ENCODE measurements at regions of chr12 and their contacts with region 1.

Region 1: GRCh38 chr12:14803011-14803829 is at the starts of genes C12orf60 and WBP11:
- DNase-seq: peak; percentile 93
- H3K4me3 Mint-ChIP-seq: no peak within 1 kb of the TSS
- H3K27ac Mint-ChIP-seq: no peak within 1 kb of the TSS
- H3K4me1 Mint-ChIP-seq: peaks cover 35% of the 10 kb centered on the region
- H3K27me3 Mint-ChIP-seq: no peaks in the 10 kb centered on the region
- total RNA-seq, gene C12orf60: 3.3 to 3.4 TPM
- total RNA-seq, gene WBP11: 131 to 134 TPM

Region 2: GRCh38 chr12:14540801-14541462 is 262.3 kb before region 1 on chr12:
- CTCF ChIA-PET with region 1: no interaction called
- POLR2A ChIA-PET with region 1: no interaction called
- intact Hi-C with region 1: no loop called
- DNase-seq: no peak
- H3K4me3 Mint-ChIP-seq: no peak overlapping the region
- H3K27ac Mint-ChIP-seq: no peak overlapping the region
- H3K4me1 Mint-ChIP-seq: no peaks in the 10 kb centered on the region
- H3K27me3 Mint-ChIP-seq: peaks cover 2% of the 10 kb centered on the region

Region 3: DNA sequence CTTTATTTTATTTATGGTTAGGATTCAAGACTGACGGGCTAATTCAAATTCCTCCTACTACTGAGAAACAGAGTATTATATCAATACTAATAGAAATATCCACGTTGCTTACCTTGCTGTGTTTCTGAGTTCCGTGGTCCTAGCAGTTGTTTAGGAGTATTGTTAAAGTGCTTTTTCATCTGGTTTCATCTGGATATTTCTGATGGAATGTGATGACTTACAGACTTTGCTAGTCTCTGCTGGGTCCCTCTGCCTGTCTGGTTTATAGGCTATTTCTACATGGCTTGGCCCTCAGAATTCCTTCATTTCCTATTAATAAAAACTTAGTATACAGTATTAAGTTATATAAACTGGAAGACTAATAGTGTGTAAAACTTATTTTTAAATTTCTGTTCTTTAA is 10.8 kb after region 1 on chr12 and contains the start of gene SMCO3:
- CTCF ChIA-PET with region 1: no interaction called
- POLR2A ChIA-PET with region 1: no interaction called
- intact Hi-C with region 1: no loop called
- DNase-seq: no peak
- H3K4me3 Mint-ChIP-seq: no peak within 1 kb of the TSS
- H3K27ac Mint-ChIP-seq: no peak within 1 kb of the TSS
- H3K4me1 Mint-ChIP-seq: peaks cover 16% of the 10 kb centered on the region
- H3K27me3 Mint-ChIP-seq: peaks cover 2% of the 10 kb centered on the region
- total RNA-seq, gene SMCO3: not detected

Region 4: GRCh38 chr12:14910090-14910915 is 107.1 kb after region 1 on chr12:
- CTCF ChIA-PET with region 1: interaction called, 5 read pairs
- POLR2A ChIA-PET with region 1: interaction called, 3 read pairs
- intact Hi-C with region 1: loop called (anchors 1 kb)
- DNase-seq: peak; percentile 67
- H3K4me3 Mint-ChIP-seq: peak overlapping the region; percentile 28
- H3K27ac Mint-ChIP-seq: peak overlapping the region; percentile 90
- H3K4me1 Mint-ChIP-seq: peaks cover 37% of the 10 kb centered on the region
- H3K27me3 Mint-ChIP-seq: no peaks in the 10 kb centered on the region

Measured in activated CD4-positive, alpha-beta memory T cell treated with anti-CD3 and anti-CD28 coated beads for 36 hours (primary cell).